Activated T-helper 1 cell treated with anti-CD3 and anti-CD28 coated beads, Interleukin-12 subunit alpha, Interleukin-12 subunit beta, Interleukin-2, Interleukin-4 antibody, amounts not matched to agents 30 ng/mL and 10 ng/mL and 1 ng/mL, durations not matched to agents 14 hours and 24 hours and 36 hours (primary cell): ENCODE measurements at regions of chr16 and their contacts with region 1.

Region 1: GRCh38 chr16:46621006-46621933 is at the start of gene SHCBP1:
- DNase-seq: peak; percentile 80
- H3K4me3 Mint-ChIP-seq: peak within 1 kb of the TSS; percentile 97
- H3K27ac Mint-ChIP-seq: peak within 1 kb of the TSS; percentile 97
- H3K4me1 Mint-ChIP-seq: peaks cover 39% of the 10 kb centered on the region
- H3K27me3 Mint-ChIP-seq: no peaks in the 10 kb centered on the region
- total RNA-seq, gene SHCBP1: 46.5 and 46.8 TPM in 2 replicates

Region 2: DNA sequence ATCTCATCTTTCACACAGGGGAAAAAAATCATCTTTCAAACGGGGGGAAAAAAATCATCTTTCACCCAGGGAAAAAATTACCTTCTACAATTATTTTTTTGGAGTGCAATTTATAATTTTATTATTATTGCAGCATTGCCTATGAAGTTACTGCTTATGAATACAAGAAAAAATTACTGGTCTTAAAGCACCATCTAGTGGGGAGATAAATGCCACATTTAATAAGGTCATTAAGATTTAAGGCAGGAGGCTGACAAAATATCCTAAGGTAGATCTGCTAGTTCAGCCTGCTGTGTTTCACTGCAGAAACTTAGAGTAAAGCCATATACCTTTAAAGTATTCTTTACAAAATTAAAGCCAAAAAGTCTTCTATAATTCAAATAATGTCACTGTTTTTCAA is 13.7 kb before region 1 on chr16:
- intact Hi-C with region 1: loop called (anchors 1 kb)
- DNase-seq: no peak
- H3K4me3 Mint-ChIP-seq: no peak overlapping the region
- H3K27ac Mint-ChIP-seq: no peak overlapping the region
- H3K4me1 Mint-ChIP-seq: no peaks in the 10 kb centered on the region
- H3K27me3 Mint-ChIP-seq: no peaks in the 10 kb centered on the region

Region 3: GRCh38 chr16:46658925-46659324 is 37.7 kb after region 1 on chr16:
- intact Hi-C with region 1: loop called (anchors 1 kb)
- DNase-seq: peak; percentile 11
- H3K4me3 Mint-ChIP-seq: no peak overlapping the region
- H3K27ac Mint-ChIP-seq: peak overlapping the region; percentile 70
- H3K4me1 Mint-ChIP-seq: peaks cover 17% of the 10 kb centered on the region
- H3K27me3 Mint-ChIP-seq: no peaks in the 10 kb centered on the region